HepG2 (cell line): ENCODE measurements at regions of chr15 and their contacts with region 1.

Region 1: GRCh38 chr15:52780172-52780980 is 9.8 kb downstream of the ONECUT1 start:
- DNase-seq: peak; percentile 51
- ATAC-seq: peak; percentile 49; the same call in 2 of the 3 replicates
- H3K4me3 ChIP-seq: no peak overlapping the region
- H3K27ac ChIP-seq: no peak overlapping the region
- H3K4me1 ChIP-seq: peaks cover 50% of the 10 kb centered on the region
- H3K27me3 ChIP-seq: no peaks in the 10 kb centered on the region
- CTCF ChIP-seq: peak; percentile 86
- EP300 ChIP-seq: no peak
- POLR2A ChIP-seq: no peak
- RAD21 ChIP-seq: peak; percentile 83

Region 2: DNA sequence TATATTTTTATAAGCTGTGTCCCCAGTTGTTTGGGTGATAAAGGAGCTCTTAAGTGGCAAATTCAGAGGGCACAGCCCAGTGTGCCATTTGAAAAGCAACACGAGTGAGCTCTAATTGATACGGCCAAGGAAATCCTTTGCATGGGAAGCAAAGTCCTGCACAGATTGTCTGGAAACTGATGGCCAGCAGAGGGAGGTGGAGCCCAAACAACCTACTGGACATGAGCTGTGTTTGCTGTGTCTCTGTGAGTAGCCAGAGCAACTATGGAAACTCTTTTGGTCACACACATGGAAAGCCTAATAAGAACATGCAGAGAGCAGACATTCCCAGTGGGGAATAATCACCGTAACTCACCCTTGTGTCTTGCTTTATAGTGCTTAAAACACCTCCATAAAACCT is 14.6 kb before region 1 on chr15:
- CTCF ChIA-PET with region 1: no interaction called
- POLR2A ChIA-PET with region 1: no interaction called
- in situ Hi-C with region 1: no loop called
- intact Hi-C with region 1: no loop called
- DNase-seq: peak; percentile 33
- ATAC-seq: peak; percentile 84
- H3K4me3 ChIP-seq: no peak overlapping the region
- H3K27ac ChIP-seq: no peak overlapping the region
- H3K4me1 ChIP-seq: peaks cover 11% of the 10 kb centered on the region
- H3K27me3 ChIP-seq: no peaks in the 10 kb centered on the region
- CTCF ChIP-seq: peak; percentile 64
- EP300 ChIP-seq: no peak
- POLR2A ChIP-seq: no peak
- RAD21 ChIP-seq: peak; percentile 52; the same call in 1 of the 2 replicates

Region 3: GRCh38 chr15:53038655-53038941 is 258.2 kb after region 1 on chr15:
- CTCF ChIA-PET with region 1: no interaction called
- POLR2A ChIA-PET with region 1: no interaction called
- in situ Hi-C with region 1: no loop called
- intact Hi-C with region 1: loop called (anchors 10 kb)
- DNase-seq: no peak
- ATAC-seq: peak; percentile 36
- H3K4me3 ChIP-seq: peak overlapping the region in 1 of 3 experiments; percentile 56; a peak in 2 of 6 replicates
- H3K27ac ChIP-seq: no peak overlapping the region
- H3K4me1 ChIP-seq: peaks cover 46% of the 10 kb centered on the region
- H3K27me3 ChIP-seq: no peaks in the 10 kb centered on the region
- CTCF ChIP-seq: no peak
- EP300 ChIP-seq: no peak
- POLR2A ChIP-seq: no peak
- RAD21 ChIP-seq: no peak

Region 4: DNA sequence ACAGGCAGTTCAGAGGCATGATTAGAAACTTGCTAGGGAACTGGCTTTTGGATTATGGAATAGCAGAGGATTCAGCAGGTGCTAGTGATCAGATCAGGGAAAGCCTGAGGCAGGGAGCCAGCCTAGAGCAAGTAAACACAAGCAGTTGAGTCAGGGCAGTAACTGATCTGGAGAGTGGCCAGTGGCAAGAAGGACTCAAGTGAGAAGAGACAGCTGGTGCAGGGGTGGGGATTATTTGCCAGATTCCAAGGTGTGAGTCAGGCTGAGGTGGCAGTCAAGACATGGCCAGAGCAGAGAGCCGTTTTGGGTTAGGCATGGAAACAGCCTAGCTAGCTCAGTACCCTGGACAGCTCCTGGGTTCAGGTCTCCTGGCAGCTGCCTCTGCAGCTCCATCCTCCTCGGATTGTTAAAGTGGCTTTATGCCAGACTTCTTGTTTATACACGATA is 291.7 kb after region 1 on chr15:
- CTCF ChIA-PET with region 1: no interaction called
- POLR2A ChIA-PET with region 1: no interaction called
- in situ Hi-C with region 1: no loop called
- intact Hi-C with region 1: loop called (anchors 1 kb)
- DNase-seq: peak; percentile 35
- ATAC-seq: peak; percentile 83
- H3K4me3 ChIP-seq: no peak overlapping the region
- H3K27ac ChIP-seq: no peak overlapping the region
- H3K4me1 ChIP-seq: no peaks in the 10 kb centered on the region
- H3K27me3 ChIP-seq: no peaks in the 10 kb centered on the region; a peak in 1 of 5 replicates
- CTCF ChIP-seq: no peak
- EP300 ChIP-seq: no peak
- POLR2A ChIP-seq: no peak
- RAD21 ChIP-seq: no peak

Region 5: DNA sequence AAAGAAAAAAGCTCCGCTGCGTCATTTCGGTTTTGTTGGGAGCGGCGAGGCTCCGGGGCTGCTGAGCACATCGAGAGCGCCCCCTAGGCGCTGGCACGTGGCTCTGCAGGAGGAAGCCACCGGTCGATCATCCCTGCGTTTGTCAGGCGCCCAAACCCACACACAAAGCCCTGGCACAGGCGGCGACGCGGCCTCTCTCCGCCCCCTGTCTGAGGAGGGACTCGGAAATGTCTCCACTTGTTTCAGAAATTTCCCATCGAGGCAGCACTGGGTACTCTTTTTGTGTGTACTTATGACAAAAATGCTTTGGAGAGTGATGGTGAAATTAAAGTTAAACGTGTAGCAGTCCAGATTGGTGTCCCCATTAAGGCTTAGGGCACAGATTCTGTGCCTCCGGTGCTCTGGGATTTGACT is 417.1 kb after region 1 on chr15:
- CTCF ChIA-PET with region 1: interaction called, 11 read pairs
- POLR2A ChIA-PET with region 1: no interaction called
- in situ Hi-C with region 1: loop called (anchors 5 kb)
- intact Hi-C with region 1: loop called (anchors 1 kb)
- DNase-seq: peak; percentile 44
- ATAC-seq: peak; percentile 95
- H3K4me3 ChIP-seq: peak overlapping the region in 1 of 3 experiments; percentile 26; a peak in 1 of 6 replicates
- H3K27ac ChIP-seq: no peak overlapping the region
- H3K4me1 ChIP-seq: peaks cover 7% of the 10 kb centered on the region
- H3K27me3 ChIP-seq: no peaks in the 10 kb centered on the region
- CTCF ChIP-seq: peak; percentile 90
- EP300 ChIP-seq: peak in 1 of 2 experiments; percentile 16; a peak in 1 of 4 replicates
- POLR2A ChIP-seq: no peak
- RAD21 ChIP-seq: peak; percentile 90

Region 6: DNA sequence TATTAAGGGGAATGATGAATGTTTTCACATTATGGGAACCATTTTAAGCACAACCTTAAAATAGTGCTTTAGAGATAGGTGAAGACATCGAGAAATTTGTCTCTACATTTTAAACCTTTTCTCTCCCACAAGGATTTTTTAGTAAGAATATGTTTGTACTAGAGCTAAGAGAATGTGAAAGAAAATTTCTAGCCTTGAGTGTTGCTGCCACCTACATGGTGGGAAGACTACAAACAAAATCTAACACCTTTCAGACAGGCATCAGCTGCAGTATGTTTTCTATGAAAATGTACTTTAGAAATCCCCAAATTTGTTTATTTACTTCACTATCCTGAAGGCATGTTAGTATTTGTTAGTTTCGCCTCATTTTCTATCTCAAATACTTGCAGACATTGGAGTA is 731.7 kb after region 1 on chr15:
- CTCF ChIA-PET with region 1: no interaction called
- POLR2A ChIA-PET with region 1: no interaction called
- in situ Hi-C with region 1: no loop called
- intact Hi-C with region 1: loop called (anchors 1 kb)
- DNase-seq: peak; percentile 22
- ATAC-seq: 0 out of 3 replicates have a peak, but pooled peaks have one; percentile 42
- H3K4me3 ChIP-seq: no peak overlapping the region
- H3K27ac ChIP-seq: no peak overlapping the region
- H3K4me1 ChIP-seq: peaks cover 27% of the 10 kb centered on the region
- H3K27me3 ChIP-seq: no peaks in the 10 kb centered on the region
- CTCF ChIP-seq: peak; percentile 43
- EP300 ChIP-seq: no peak
- POLR2A ChIP-seq: no peak
- RAD21 ChIP-seq: 0 out of 2 replicates have a peak, but pooled peaks have one; percentile 43

Region 7: DNA sequence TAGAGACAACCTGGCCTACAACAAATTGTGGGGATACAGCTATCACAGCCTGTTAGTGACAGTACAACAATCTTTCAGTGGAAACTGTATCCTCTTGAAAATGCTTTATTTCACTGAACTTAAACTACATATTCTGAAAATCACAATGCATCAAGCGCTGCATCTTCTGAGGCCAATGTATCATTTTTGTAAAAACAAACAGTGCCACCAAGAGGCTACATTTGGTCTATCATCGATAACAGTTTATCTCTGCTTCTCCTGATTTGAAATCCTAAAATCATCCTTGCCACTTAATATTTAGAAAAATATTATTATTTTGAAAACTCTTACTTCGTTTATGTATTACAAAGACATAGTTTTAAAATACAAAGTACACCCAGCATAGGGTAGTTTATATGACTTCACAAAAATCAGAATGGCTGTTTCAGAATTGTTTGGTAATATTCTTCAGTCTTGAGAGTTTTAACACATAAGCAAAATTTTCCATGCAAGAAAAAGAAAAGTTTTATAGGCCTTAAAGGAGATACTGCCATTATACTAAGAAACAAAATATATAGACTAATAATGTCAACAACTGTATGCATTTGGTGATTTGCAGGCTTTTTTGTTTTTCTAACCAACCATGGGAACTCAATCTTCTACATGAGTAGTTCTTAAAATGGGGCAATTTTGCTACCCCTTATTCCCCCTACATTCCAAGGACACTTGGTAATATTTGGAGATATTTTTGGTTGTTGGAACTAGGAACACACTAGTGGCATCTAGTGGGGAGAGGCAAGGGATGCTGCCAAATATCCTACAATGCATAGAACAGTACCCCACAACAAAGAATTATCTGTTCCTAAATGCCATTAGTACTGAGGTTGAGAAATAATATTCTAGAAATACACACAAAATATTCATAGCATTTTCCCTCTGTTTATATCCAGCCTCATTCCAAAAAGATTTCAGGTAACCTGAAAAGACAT is 936.8 kb after region 1 on chr15:
- CTCF ChIA-PET with region 1: interaction called, 3 read pairs
- POLR2A ChIA-PET with region 1: no interaction called
- in situ Hi-C with region 1: loop called (anchors 10 kb)
- intact Hi-C with region 1: loop called (anchors 1 kb)
- DNase-seq: peak; percentile 20
- ATAC-seq: peak; percentile 48; the same call in 1 of the 3 replicates
- H3K4me3 ChIP-seq: no peak overlapping the region
- H3K27ac ChIP-seq: no peak overlapping the region
- H3K4me1 ChIP-seq: peaks cover 6% of the 10 kb centered on the region
- H3K27me3 ChIP-seq: no peaks in the 10 kb centered on the region
- CTCF ChIP-seq: peak; percentile 68
- EP300 ChIP-seq: no peak
- POLR2A ChIP-seq: no peak
- RAD21 ChIP-seq: no peak